Heart left ventricle (tissue), 16 donors: ENCODE measurements at regions of chr3 and their contacts with region 1.

Region 1: GRCh38 chr3:64030741-64031140 is 7.4 kb upstream of the PSMD6 start:
- DNase-seq: peak; percentile 66 to 79 (median 71)
- ATAC-seq: peak; percentile 58 to 91 (median 87)
- H3K4me3 ChIP-seq: peak overlapping the region in 9 of 12 donors; percentile 16 to 47 (median 34)
- H3K27ac ChIP-seq: no peak overlapping the region
- H3K4me1 ChIP-seq: peaks cover 0 to 8% (median 0%) of the 10 kb centered on the region in 12 donors
- H3K27me3 ChIP-seq: peaks cover 0 to 12% (median 0%) of the 10 kb centered on the region in 9 donors
- CTCF ChIP-seq: peak; percentile 78 to 93 (median 88)
- POLR2A ChIP-seq: no peak

Region 2: DNA sequence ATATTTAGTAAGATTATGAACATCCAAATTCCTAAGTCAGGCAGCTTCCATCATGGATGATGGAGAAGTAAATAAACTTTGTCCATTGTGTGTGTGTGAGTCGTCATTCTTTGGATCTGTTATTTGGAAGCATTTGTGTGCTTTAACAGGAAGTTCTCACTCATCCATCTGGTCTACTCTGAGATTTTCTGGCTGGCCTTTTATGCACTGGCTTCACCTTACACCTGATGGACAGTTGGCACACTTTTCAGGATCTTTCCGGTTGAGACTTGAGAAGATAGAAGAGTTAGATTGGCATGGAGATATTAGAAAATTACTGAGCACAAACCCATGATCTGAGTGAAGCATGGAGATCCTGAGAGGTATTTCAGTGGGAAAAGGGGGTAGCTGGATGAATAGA is 740.1 kb before region 1 on chr3:
- intact Hi-C with region 1: no loop called
- DNase-seq: no peak
- ATAC-seq: no peak
- H3K4me3 ChIP-seq: no peak overlapping the region
- H3K27ac ChIP-seq: no peak overlapping the region
- H3K4me1 ChIP-seq: no peaks in the 10 kb centered on the region
- H3K27me3 ChIP-seq: no peaks in the 10 kb centered on the region
- CTCF ChIP-seq: no peak
- POLR2A ChIP-seq: no peak

Region 3: DNA sequence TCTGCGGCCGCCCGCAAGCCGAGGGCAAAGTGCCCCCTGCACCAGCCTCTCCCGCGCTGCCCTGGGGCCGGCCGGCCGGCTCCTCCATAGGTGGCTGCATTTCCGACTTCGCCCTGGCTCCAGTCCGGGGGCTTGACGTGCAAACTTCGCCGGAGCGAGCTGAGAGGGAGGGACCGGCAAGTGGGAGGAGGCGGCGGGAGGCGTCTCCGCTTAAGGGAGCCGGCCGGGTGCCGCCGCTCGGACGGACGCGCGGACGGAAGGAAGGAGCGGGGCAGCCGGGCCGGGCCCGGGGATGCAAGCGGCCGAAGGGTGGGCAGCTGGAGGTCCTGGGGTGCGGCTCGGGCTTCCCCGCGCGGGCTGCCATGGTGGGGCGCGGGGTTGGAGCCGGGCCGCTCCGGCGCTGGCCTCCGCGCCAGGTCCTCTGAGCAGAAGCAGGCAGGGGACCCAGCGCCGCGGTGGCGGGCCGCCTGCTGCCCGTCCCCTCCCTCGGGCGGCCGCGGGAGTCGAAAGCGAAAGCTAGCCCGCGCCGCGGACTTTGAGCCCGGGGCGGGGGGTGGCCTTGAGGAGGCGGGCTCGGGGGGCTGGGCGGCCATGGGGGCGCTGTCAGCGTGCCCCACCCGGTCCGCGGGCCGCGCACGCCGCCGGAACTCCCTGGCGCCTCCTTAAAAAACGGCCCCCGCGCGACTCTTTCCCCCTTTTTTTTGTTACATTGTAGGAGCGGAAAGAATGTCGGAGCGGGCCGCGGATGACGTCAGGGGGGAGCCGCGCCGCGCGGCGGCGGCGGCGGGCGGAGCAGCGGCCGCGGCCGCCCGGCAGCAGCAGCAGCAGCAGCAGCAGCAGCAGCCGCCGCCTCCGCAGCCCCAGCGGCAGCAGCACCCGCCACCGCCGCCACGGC is 118.6 kb before region 1 on chr3 and contains the start of gene SCAANT1:
- intact Hi-C with region 1: no loop called
- DNase-seq: peak; percentile 93 to 96 (median 94)
- ATAC-seq: peak; percentile 93 to 96 (median 94)
- H3K4me3 ChIP-seq: peak within 1 kb of the TSS; percentile 71 to 98 (median 83)
- H3K27ac ChIP-seq: peak within 1 kb of the TSS; percentile 96 to 100 (median 99)
- H3K4me1 ChIP-seq: peaks cover 2 to 53% (median 27%) of the 10 kb centered on the region in 12 donors
- H3K27me3 ChIP-seq: no peaks in the 10 kb centered on the region
- CTCF ChIP-seq: peak in 6 of 12 donors; percentile 6 to 27 (median 16)
- POLR2A ChIP-seq: peak in 1 of 2 donors; percentile 68
- total RNA-seq, gene SCAANT1: not detected

Region 4: DNA sequence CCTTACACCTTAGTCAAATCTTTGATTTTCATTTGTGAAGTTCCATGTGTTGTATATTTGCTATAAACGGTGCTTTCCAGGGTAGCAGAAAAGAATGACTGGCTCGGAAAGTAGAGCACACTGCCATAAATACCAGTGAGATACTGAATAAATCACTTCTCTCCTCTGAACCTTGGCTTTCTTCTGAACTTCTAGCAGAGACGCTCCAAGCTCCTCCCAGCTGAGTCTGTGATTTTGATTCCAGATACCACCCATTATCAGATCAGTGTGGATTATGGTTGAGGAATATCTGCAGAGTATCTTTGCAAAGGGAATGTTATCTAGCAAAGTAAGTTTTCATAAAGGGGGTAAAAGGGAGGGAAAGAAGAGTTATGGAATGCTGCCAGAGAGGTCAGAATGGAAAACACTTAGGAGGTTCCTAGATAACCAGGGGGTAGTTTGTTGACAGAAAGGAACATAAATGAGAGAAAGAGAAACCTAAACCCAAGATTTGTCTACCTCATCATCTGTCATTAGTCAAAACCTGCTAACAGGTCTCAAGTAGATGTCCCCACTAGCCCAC is 91.1 kb after region 1 on chr3:
- intact Hi-C with region 1: no loop called
- DNase-seq: no peak
- ATAC-seq: no peak
- H3K4me3 ChIP-seq: no peak overlapping the region
- H3K27ac ChIP-seq: peak overlapping the region in 1 of 12 donors; percentile 44
- H3K4me1 ChIP-seq: peaks cover 0 to 19% (median 10%) of the 10 kb centered on the region in 12 donors
- H3K27me3 ChIP-seq: no peaks in the 10 kb centered on the region
- CTCF ChIP-seq: no peak
- POLR2A ChIP-seq: no peak

Region 5: DNA sequence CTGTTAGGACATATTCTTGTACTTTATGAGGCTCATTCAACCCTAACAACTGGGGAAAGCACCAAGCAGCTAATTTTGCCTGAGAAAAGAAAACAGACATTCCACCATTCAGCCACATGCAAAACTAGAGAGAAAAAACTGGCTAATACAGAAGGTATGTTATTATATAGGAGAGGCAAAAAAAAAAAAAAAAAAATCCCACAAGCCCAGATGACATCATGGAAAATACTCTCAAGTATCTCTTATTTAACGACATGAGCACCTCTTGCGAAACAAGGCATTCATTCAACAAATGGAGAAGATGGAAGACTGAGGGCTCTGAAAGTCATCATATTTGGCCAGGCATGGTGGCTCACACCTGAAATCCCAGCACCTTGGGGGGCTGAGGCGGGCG is 133.0 kb after region 1 on chr3:
- intact Hi-C with region 1: loop called in 7 of 10 experiments (anchors 5 to 10 kb)
- DNase-seq: no peak
- ATAC-seq: no peak
- H3K4me3 ChIP-seq: no peak overlapping the region
- H3K27ac ChIP-seq: peak overlapping the region in 1 of 12 donors; percentile 66
- H3K4me1 ChIP-seq: peaks cover 0 to 58% (median 24%) of the 10 kb centered on the region in 12 donors
- H3K27me3 ChIP-seq: no peaks in the 10 kb centered on the region
- CTCF ChIP-seq: no peak
- POLR2A ChIP-seq: no peak

Region 6: GRCh38 chr3:64213962-64214379 is 183.2 kb after region 1 on chr3:
- intact Hi-C with region 1: loop called in 1 of 10 experiments (anchors 10 kb)
- DNase-seq: peak; percentile 75 to 87 (median 79)
- ATAC-seq: peak; percentile 27 to 58 (median 50)
- H3K4me3 ChIP-seq: peak overlapping the region in 9 of 12 donors; percentile 10 to 48 (median 38)
- H3K27ac ChIP-seq: peak overlapping the region; percentile 26 to 84 (median 74)
- H3K4me1 ChIP-seq: peaks cover 3 to 87% (median 50%) of the 10 kb centered on the region in 12 donors
- H3K27me3 ChIP-seq: no peaks in the 10 kb centered on the region
- CTCF ChIP-seq: no peak
- POLR2A ChIP-seq: no peak

Region 7: GRCh38 chr3:64224826-64225610 is 194.3 kb after region 1 on chr3 and contains the start of gene PRICKLE2:
- intact Hi-C with region 1: loop called in 7 of 10 experiments (anchors 2 to 5 kb)
- DNase-seq: peak; percentile 80 to 86 (median 82)
- ATAC-seq: peak; percentile 63 to 88 (median 77)
- H3K4me3 ChIP-seq: peak within 1 kb of the TSS in 11 of 12 donors; percentile 3 to 57 (median 45)
- H3K27ac ChIP-seq: peak within 1 kb of the TSS; percentile 37 to 85 (median 72)
- H3K4me1 ChIP-seq: peaks cover 2 to 85% (median 56%) of the 10 kb centered on the region in 12 donors
- H3K27me3 ChIP-seq: no peaks in the 10 kb centered on the region
- CTCF ChIP-seq: peak in 6 of 12 donors; percentile 15 to 47 (median 34)
- POLR2A ChIP-seq: no peak
- total RNA-seq, gene PRICKLE2: 4.3 to 15.2 (median 7.8) TPM

Region 8: GRCh38 chr3:64399205-64399800 is 368.6 kb after region 1 on chr3:
- intact Hi-C with region 1: loop called (anchors 1 to 2 kb)
- DNase-seq: peak in 2 of 5 donors; percentile 21 to 44
- ATAC-seq: peak in 3 of 4 donors; percentile 56 to 81 (median 60)
- H3K4me3 ChIP-seq: no peak overlapping the region
- H3K27ac ChIP-seq: no peak overlapping the region
- H3K4me1 ChIP-seq: no peaks in the 10 kb centered on the region
- H3K27me3 ChIP-seq: no peaks in the 10 kb centered on the region
- CTCF ChIP-seq: peak; percentile 52 to 88 (median 82)
- POLR2A ChIP-seq: no peak

Region 9: GRCh38 chr3:64405211-64405835 is 374.6 kb after region 1 on chr3:
- intact Hi-C with region 1: loop called in 2 of 10 experiments (anchors 2 kb)
- DNase-seq: no peak
- ATAC-seq: no peak
- H3K4me3 ChIP-seq: no peak overlapping the region
- H3K27ac ChIP-seq: no peak overlapping the region
- H3K4me1 ChIP-seq: no peaks in the 10 kb centered on the region
- H3K27me3 ChIP-seq: peaks cover 0 to 8% (median 0%) of the 10 kb centered on the region in 9 donors
- CTCF ChIP-seq: no peak
- POLR2A ChIP-seq: no peak

Region 10: DNA sequence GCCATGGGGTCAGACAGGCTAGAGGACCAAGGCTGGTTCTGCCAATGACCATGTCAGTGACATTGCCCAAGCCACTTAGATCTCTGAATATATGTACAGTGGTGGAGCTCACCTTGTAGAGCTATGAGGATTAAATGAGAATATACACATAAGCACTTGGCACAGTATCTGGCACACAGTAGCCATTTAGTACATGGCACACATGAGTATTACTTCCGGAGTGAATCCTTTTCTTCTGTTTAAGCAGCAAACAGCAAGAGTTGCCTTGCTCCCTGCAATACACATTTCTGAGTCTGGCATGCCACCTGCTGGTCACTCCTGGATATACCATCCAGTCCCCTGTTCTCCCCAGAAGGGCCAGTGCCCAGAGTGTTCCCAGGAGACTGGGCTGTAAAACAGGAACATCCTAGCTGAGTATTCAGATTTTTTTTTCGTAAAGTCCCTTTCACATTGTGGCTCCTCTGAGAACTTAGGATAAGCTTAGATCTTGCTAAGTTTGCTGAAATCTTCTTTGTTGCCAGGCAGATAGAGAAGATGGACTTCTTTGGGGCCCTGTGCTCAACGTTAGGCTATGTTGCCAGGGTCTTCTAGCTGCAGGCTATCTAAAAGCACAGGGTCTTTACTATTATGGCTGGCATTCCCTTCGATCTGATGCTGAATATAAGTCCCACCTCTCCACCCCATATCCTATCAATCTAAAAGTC is 453.7 kb after region 1 on chr3:
- intact Hi-C with region 1: loop called (anchors 1 to 5 kb)
- DNase-seq: peak; percentile 67 to 82 (median 70)
- ATAC-seq: peak; percentile 83 to 94 (median 94)
- H3K4me3 ChIP-seq: no peak overlapping the region
- H3K27ac ChIP-seq: no peak overlapping the region
- H3K4me1 ChIP-seq: peaks cover 0 to 13% (median 1%) of the 10 kb centered on the region in 12 donors
- H3K27me3 ChIP-seq: peaks cover 0 to 2% (median 0%) of the 10 kb centered on the region in 9 donors
- CTCF ChIP-seq: peak; percentile 76 to 95 (median 88)
- POLR2A ChIP-seq: no peak